Endothelial cell of umbilical vein (primary cell): ENCODE measurements at regions of chr2 and their contacts with region 1.

Region 1: GRCh38 chr2:176096986-176097819 is 2.4 kb upstream of the HOXD12 start:
- DNase-seq: peak; percentile 72
- H3K4me3 ChIP-seq: peak overlapping the region in 1 of 3 experiments; percentile 17
- H3K27ac ChIP-seq: no peak overlapping the region
- H3K4me1 ChIP-seq: peaks cover 5% of the 10 kb centered on the region
- H3K27me3 ChIP-seq: peaks cover 87 to 97% of the 10 kb centered on the region in 2 experiments
- CTCF ChIP-seq: peak; percentile 83 to 93
- POLR2A ChIP-seq: no peak

Region 2: DNA sequence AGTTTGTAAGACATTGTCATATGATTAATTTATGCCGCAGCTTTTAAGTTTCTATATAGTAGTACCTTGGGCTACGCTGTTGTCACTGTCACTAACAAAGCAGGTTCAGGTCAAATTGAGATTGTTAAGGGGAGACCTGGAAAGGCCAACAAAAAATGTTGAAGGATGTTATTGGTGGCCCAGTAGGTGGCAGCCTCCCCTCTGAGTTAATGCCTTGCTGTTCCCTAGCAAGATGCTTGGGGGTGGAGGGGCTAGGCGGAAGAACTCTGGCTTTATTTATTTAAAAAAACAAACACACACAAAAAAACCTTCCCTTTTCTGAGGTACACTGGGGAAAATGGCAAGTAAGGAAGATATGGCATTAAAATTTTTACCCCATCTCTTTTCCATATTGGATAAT is 787.4 kb before region 1 on chr2:
- CTCF ChIA-PET with region 1: interaction called, 4 read pairs
- POLR2A ChIA-PET with region 1: no interaction called
- dilution Hi-C with region 1: no loop called
- intact Hi-C with region 1: loop called (anchors 5 kb)
- DNase-seq: peak; percentile 11
- H3K4me3 ChIP-seq: no peak overlapping the region
- H3K27ac ChIP-seq: no peak overlapping the region
- H3K4me1 ChIP-seq: no peaks in the 10 kb centered on the region
- H3K27me3 ChIP-seq: peaks cover 0 to 14% of the 10 kb centered on the region in 2 experiments
- CTCF ChIP-seq: peak; percentile 18 to 38
- POLR2A ChIP-seq: no peak

Region 3: DNA sequence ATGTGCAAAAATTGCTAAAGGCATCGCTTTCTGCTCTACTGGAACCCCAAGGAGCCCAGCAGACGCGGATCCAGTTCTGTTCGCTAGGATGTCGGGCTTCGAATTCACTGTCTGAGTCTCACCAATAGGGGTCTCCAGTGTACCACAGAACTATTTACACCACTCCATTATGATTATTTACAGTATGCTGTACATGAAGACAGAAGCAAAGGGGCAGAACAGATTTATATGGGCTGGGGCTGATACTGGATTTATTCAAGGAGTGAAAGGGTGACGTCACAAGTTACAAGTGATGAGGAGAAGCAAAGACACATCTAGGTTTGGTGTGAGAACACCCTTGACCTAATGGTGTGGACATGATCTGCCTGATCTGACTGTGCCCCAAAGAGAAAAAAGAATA is 730.4 kb before region 1 on chr2:
- CTCF ChIA-PET with region 1: interaction called, 25 read pairs
- POLR2A ChIA-PET with region 1: no interaction called
- dilution Hi-C with region 1: no loop called
- intact Hi-C with region 1: loop called (anchors 1 kb)
- DNase-seq: peak; percentile 70
- H3K4me3 ChIP-seq: no peak overlapping the region
- H3K27ac ChIP-seq: no peak overlapping the region
- H3K4me1 ChIP-seq: no peaks in the 10 kb centered on the region
- H3K27me3 ChIP-seq: peaks cover 5 to 34% of the 10 kb centered on the region in 2 experiments
- CTCF ChIP-seq: peak; percentile 74 to 75
- POLR2A ChIP-seq: no peak

Region 4: GRCh38 chr2:175630280-175631244 is 466.6 kb before region 1 on chr2:
- CTCF ChIA-PET with region 1: no interaction called
- POLR2A ChIA-PET with region 1: no interaction called
- dilution Hi-C with region 1: no loop called
- intact Hi-C with region 1: no loop called
- DNase-seq: no peak
- H3K4me3 ChIP-seq: no peak overlapping the region
- H3K27ac ChIP-seq: no peak overlapping the region
- H3K4me1 ChIP-seq: no peaks in the 10 kb centered on the region
- H3K27me3 ChIP-seq: no peaks in the 10 kb centered on the region
- CTCF ChIP-seq: no peak
- POLR2A ChIP-seq: no peak

Region 5: DNA sequence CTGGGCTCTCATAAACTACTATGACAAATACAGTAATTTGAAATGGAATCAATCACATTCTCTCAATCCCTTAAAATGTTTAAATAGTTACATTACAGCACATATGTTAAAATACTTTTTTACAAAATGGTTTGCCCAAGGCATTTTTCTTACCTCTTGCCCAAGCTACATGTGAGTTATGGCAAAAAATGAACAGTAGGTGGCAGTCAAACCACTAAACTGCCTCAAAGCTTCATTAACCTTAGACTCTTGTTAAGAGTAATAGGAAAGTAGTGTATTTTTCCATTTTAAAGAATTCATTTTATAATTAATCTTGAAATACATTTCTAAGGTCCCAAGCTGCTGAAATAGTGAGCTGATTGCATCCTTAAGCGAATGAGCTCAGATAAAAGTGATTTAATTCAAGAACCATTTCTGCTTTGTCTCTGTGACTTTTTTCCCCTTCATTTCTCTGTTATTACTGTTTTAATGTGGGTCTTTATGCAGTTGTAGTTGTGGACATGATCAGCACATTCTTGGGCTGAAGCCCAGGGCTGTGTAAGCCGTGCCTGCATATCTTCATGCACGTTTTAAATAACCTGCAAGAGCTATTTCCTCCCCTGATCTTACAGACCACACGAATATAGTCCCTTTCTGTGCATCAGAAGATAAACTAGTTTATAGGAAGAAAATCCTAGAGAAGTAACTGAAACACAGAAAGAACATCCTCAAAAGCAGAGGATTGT is 406.9 kb before region 1 on chr2:
- CTCF ChIA-PET with region 1: interaction called, 92 read pairs
- POLR2A ChIA-PET with region 1: no interaction called
- dilution Hi-C with region 1: no loop called
- intact Hi-C with region 1: loop called (anchors 1 kb)
- DNase-seq: peak; percentile 81
- H3K4me3 ChIP-seq: no peak overlapping the region
- H3K27ac ChIP-seq: no peak overlapping the region
- H3K4me1 ChIP-seq: no peaks in the 10 kb centered on the region
- H3K27me3 ChIP-seq: peaks cover 2 to 4% of the 10 kb centered on the region in 2 experiments
- CTCF ChIP-seq: peak; percentile 42 to 54
- POLR2A ChIP-seq: no peak

Region 6: GRCh38 chr2:175766880-175767279 is 330.3 kb before region 1 on chr2:
- CTCF ChIA-PET with region 1: no interaction called
- POLR2A ChIA-PET with region 1: no interaction called
- dilution Hi-C with region 1: no loop called
- intact Hi-C with region 1: no loop called
- DNase-seq: no peak
- H3K4me3 ChIP-seq: no peak overlapping the region
- H3K27ac ChIP-seq: no peak overlapping the region
- H3K4me1 ChIP-seq: no peaks in the 10 kb centered on the region
- H3K27me3 ChIP-seq: no peaks in the 10 kb centered on the region
- CTCF ChIP-seq: no peak
- POLR2A ChIP-seq: no peak

Region 7: DNA sequence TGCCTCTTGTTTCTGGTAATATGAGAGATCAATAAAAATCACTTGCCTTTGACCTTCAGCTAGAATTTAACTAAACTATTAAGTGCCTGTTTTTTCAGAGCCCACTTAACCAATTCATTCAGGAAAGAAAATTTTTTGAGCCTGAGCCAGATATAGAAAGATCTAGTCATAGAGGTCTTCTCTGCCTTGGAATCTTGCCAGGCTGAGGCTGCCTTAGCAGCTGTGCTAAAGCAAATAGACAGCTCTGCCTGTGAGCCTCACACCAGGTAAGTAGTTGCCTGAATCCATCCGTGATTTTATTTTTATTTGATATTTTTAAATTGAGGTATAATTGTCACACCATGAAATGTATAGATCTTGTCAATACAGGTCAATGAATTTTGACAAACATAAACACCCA is 40.8 kb before region 1 on chr2:
- CTCF ChIA-PET with region 1: no interaction called
- POLR2A ChIA-PET with region 1: no interaction called
- dilution Hi-C with region 1: no loop called
- intact Hi-C with region 1: no loop called
- DNase-seq: no peak
- H3K4me3 ChIP-seq: no peak overlapping the region
- H3K27ac ChIP-seq: no peak overlapping the region
- H3K4me1 ChIP-seq: no peaks in the 10 kb centered on the region
- H3K27me3 ChIP-seq: peaks cover 3 to 11% of the 10 kb centered on the region in 2 experiments
- CTCF ChIP-seq: no peak
- POLR2A ChIP-seq: no peak

Region 8: DNA sequence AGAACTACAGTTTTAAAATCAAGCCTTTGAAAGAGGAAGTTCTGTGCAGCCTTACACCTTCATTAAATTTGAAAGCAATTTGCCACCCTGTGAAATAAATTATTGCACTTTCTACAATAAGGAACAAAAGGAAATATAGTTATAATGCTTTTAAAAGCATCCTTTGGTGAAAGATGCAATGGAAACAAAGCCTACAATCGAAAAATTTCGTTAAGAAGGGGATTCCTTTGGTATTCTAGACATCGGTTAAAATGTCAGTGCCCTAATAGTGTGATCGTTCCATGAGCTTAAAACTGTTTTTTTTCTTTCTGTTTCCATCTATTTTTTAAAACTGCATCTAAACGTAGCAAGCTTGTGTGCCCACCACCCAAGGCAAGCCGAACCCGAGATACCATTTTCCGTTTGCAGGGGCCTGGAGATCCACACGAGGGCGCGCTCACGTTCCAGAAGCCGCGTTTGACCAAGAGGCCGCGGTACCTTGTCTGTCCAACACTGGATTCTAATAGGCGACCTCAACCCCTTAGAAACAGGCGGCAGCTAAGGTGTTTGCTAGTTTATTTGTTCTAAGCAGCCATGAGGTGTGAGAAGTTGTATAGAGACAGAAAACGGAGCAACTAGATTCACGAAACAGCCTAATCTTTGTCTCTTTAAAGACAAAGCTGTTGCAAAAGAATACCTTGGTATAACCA is 13.9 kb after region 1 on chr2:
- CTCF ChIA-PET with region 1: interaction called, 20 read pairs
- POLR2A ChIA-PET with region 1: no interaction called
- dilution Hi-C with region 1: no loop called
- intact Hi-C with region 1: no loop called
- DNase-seq: peak; percentile 74
- H3K4me3 ChIP-seq: no peak overlapping the region
- H3K27ac ChIP-seq: no peak overlapping the region
- H3K4me1 ChIP-seq: no peaks in the 10 kb centered on the region
- H3K27me3 ChIP-seq: peaks cover 81 to 96% of the 10 kb centered on the region in 2 experiments
- CTCF ChIP-seq: peak; percentile 87 to 93
- POLR2A ChIP-seq: no peak